Pancreas (tissue), 10 donors: ENCODE measurements at regions of chr20 and their contacts with region 1.

Region 1: GRCh38 chr20:47379433-47380150 is 23.1 kb upstream of the ZMYND8 start:
- DNase-seq: no peak
- ATAC-seq: no peak
- H3K4me3 ChIP-seq: no peak overlapping the region
- H3K27ac ChIP-seq: peak overlapping the region in 1 of 4 donors; percentile 55
- H3K4me1 ChIP-seq: peaks cover 0 to 8% (median 0%) of the 10 kb centered on the region in 3 donors
- H3K27me3 ChIP-seq: no peaks in the 10 kb centered on the region
- CTCF ChIP-seq: no peak

Region 2: DNA sequence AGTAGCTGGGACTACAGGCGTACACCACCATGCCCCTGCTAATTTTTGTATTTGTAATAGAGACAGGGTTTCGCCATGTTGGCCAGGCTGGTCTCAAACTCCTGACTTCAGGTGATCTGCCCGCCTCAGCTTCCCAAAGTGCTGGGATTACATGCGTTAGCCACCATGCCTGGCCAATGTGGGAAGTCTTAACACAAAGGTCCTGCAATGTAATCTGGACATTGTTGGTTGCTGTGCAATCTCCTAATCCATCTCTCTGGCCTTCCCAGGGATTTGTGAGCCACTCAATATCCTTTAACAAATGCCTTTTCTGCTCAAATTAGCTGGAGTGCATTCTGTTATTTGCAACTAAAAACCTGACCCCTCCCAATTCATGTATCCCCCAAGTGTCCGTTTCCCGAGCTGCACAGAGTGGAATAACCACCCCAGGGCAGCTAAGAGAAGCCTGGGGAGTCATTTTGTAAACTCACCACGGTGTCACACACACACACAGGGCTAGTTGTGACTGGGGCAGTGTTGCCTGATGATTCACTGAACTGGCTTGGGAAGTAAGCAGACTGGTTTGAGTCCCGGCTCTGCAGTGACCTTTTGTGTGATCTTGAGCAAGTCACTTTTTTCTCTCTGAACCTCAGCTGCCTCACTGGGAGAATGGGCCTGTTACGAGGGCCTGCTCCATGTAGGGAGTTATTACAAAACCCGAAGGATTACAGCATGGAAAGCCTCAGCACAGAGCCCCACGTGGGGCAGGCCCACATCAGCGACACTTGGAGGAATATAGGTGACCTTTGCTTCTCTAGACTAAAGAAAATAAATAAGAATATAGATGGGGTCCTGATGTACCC is 175.4 kb before region 1 on chr20:
- intact Hi-C with region 1: loop called in 2 of 3 experiments (anchors 5 to 10 kb)
- DNase-seq: no peak
- ATAC-seq: peak in 1 of 4 donors; percentile 6
- H3K4me3 ChIP-seq: no peak overlapping the region
- H3K27ac ChIP-seq: no peak overlapping the region
- H3K4me1 ChIP-seq: peaks cover 0 to 4% (median 0%) of the 10 kb centered on the region in 3 donors
- H3K27me3 ChIP-seq: no peaks in the 10 kb centered on the region
- CTCF ChIP-seq: no peak

Region 3: DNA sequence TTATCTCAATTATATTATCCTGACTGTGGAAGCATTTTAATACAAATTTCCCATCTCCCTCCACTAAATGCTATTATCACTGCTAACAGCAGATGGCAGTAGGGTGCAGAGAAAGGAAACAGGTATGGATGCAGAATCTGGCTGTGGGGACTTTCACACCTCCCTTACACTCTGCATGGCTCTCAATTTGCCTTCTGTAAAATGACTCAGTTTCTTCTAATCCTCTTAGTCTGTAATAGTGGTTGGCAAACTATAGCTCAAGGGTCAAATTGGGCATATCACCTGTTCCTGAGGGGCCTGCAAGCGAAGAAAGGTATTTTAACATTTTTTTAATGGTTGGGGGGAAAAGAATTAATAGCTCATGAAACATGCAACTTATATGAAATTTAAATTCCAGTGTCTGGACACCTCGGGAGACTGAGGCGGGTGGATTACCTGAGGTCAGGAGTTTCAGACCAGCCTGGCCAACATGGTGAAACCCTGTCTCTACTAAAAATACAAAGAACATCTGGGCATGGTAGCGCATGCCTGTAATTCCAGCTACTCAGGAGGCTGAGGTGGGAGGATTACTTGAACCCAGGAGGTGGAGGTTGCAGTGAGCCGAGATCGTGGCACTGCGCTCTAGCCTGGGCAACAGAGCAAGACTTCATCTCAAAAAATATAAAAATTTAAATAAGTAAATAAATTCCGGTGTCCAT is 106.5 kb before region 1 on chr20:
- intact Hi-C with region 1: loop called in 1 of 3 experiments (anchors 5 kb)
- DNase-seq: peak in 2 of 6 donors; percentile 34 to 44
- ATAC-seq: peak; percentile 68 to 91 (median 85)
- H3K4me3 ChIP-seq: no peak overlapping the region
- H3K27ac ChIP-seq: peak overlapping the region in 1 of 4 donors; percentile 70
- H3K4me1 ChIP-seq: peaks cover 0 to 31% (median 8%) of the 10 kb centered on the region in 3 donors
- H3K27me3 ChIP-seq: no peaks in the 10 kb centered on the region
- CTCF ChIP-seq: peak; percentile 36 to 74 (median 64)

Region 4: DNA sequence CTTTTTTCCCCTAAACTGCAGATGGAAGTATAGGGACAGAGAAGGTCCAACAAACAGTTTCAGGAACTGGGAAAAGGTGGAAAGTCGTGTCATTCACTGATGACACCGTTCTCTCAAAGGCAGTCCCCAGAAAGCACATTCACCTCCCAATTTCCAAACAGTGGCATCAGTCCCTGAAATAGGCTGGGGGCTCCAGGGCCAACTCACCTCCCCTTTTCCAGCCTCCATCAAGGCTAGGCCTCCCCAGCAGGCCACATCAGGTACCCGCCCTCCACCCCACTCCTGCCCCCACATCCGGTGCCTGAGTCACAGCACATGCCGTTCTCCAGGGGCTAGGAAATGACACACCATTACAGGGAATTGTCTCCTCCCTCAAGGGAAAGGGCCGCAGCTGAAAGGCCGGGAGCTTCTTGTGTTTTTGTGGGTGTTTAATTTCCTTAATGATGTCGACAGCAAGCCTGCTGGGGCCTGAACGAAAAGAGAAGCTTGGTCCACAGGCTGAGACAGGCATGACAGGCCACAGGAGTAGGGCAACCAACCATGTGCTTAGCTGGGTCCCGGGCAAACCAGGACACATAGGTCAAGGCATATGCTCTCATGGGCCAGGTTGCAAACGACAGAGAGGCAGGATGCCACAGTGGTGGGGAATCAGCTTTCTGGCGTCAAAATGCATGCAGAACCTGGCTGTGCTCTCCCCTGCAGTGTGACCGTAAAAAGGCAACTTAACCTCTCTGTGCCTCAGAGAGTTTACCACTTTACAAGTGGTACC is 62.3 kb before region 1 on chr20:
- intact Hi-C with region 1: loop called in 1 of 3 experiments (anchors 10 kb)
- DNase-seq: peak in 4 of 6 donors; percentile 26 to 40 (median 34)
- ATAC-seq: peak in 3 of 4 donors; percentile 7 to 51 (median 26)
- H3K4me3 ChIP-seq: no peak overlapping the region
- H3K27ac ChIP-seq: peak overlapping the region; percentile 82 to 93 (median 92)
- H3K4me1 ChIP-seq: peaks cover 26 to 54% (median 42%) of the 10 kb centered on the region in 3 donors
- H3K27me3 ChIP-seq: no peaks in the 10 kb centered on the region
- CTCF ChIP-seq: no peak

Region 5: GRCh38 chr20:47493175-47493962 is 113.8 kb after region 1 on chr20:
- intact Hi-C with region 1: no loop called
- DNase-seq: peak; percentile 84 to 91 (median 90)
- ATAC-seq: peak; percentile 86 to 96 (median 94)
- H3K4me3 ChIP-seq: peak overlapping the region in 1 of 4 donors; percentile 20
- H3K27ac ChIP-seq: peak overlapping the region; percentile 0 to 79 (median 34)
- H3K4me1 ChIP-seq: peaks cover 6 to 17% (median 17%) of the 10 kb centered on the region in 3 donors
- H3K27me3 ChIP-seq: no peaks in the 10 kb centered on the region
- CTCF ChIP-seq: no peak